MCF 10A (cell line): ENCODE measurements at regions of chr2 and their contacts with region 1.

Region 1: DNA sequence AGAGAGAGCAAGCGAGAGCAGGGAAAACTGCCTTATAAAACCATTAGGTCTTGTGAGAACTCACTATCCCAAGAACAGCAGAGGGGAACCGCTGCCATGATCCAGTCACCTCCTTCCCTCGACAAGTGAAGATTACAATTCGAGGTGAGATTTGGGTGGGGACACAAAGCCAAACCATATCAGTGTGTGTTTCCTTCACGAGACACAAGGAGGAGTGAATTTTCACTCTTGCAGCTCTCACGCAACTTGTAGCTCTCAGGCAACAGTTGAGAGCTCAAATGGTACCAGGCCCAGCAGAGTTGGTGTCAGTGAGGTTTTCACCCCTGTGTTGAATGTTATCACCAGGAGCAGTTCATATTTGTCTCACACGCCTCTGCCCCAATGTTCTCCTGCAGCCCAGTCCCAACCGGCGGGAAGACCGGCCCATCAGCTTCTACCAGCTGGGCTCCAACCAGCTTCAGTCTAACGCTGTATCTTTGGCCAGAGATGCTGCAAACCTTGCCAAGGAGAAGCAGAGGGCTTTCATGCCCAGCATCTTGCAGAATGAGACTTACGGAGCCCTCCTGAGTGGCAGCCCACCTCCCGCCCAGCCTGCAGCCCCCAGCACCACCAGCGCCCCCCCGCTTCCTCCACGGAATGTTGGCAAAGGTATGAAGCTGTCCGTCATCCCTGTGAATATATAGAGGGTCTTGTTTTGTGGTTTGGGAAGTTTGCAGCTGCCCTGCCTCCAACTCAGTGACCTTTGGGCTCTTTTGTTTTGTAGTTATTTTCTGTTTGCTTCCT is 35.2 kb downstream of the ITGB1BP1 start:
- DNase-seq: no peak
- H3K4me3 Mint-ChIP-seq: no peak overlapping the region
- H3K27ac Mint-ChIP-seq: peak overlapping the region; percentile 98
- H3K4me1 Mint-ChIP-seq: peaks cover 24% of the 10 kb centered on the region
- H3K27me3 Mint-ChIP-seq: no peaks in the 10 kb centered on the region
- CTCF ChIP-seq: no peak

Region 2: DNA sequence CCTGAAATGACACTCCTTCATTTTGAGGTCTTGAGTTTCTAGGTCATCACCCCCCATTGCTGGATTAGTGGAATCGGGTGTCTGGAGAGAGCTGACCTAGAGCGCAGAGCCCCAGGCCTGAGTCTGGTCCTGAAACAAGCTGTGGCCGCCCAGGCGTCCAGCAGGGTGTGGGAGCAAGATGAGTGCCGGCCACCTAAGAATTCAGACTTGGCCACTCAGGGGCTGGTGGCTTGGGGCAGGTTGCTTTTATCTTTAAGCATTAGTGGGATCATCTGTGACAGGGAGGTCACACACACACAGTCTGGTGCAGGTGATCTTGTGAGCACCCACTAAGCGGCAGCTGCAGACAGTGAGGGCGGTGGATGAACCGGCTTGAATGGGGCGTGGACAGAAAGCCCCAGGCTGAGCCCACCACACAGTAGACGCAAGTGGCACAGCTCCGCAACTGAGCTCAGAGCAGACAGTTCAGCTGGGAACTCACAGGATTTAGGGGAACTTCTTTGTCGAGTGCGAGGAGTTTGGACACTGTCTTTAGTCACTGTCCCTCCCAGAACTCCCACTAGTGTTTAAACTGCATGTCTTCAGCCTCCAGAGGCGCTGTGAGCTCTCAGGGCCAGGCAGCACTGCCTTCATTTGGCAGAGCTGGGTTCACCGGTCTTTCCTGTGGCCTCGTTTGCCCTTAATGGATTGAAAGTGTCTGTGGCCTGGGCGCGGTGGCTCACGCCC is 13.7 kb after region 1 on chr2:
- CTCF ChIA-PET with region 1: interaction called, 3 read pairs
- POLR2A ChIA-PET with region 1: interaction called, 10 read pairs
- intact Hi-C with region 1: no loop called
- DNase-seq: no peak
- H3K4me3 Mint-ChIP-seq: no peak overlapping the region
- H3K27ac Mint-ChIP-seq: no peak overlapping the region
- H3K4me1 Mint-ChIP-seq: no peaks in the 10 kb centered on the region
- H3K27me3 Mint-ChIP-seq: no peaks in the 10 kb centered on the region
- CTCF ChIP-seq: no peak